ENCODE measurements at regions of chr1 and their contacts with region 1.

Region 1: GRCh38 chr1:224644553-224645154 is 28.5 kb downstream of the CNIH3 start:
- DNase-seq: peak in 1 of 5 donors; percentile 16
- ATAC-seq: peak in 3 of 4 donors; percentile 42 to 57 (median 52)
- H3K4me3 ChIP-seq: no peak overlapping the region
- H3K27ac ChIP-seq: no peak overlapping the region
- H3K4me1 ChIP-seq: peaks cover 0 to 10% (median 0%) of the 10 kb centered on the region in 12 donors
- H3K27me3 ChIP-seq: peaks cover 0 to 5% (median 0%) of the 10 kb centered on the region in 9 donors
- CTCF ChIP-seq: peak; percentile 71 to 91 (median 85)
- POLR2A ChIP-seq: no peak

Region 2: DNA sequence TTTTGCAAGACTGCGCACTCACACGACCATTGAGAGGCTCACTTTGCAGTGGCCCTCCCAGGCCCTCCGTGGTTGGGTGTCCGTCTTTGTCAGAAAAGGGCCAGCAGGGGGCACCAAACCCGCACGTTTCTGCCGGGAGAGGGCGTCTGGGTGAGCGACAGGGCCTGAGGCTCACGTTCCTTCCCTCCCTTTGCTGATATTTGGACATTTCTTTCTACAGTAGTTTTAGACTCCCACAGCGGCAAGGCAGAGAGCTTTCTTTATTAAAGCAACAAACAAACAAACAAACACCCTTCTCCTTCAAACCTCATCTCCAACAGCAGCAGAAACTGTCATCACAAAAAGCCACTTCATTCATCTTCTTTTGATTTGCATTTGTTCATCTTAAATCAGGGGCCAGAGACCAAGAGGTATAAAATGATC is 130.9 kb before region 1 on chr1:
- intact Hi-C with region 1: loop called in 4 of 10 experiments (anchors 5 to 10 kb)
- DNase-seq: peak; percentile 79 to 90 (median 84)
- ATAC-seq: peak; percentile 75 to 95 (median 92)
- H3K4me3 ChIP-seq: no peak overlapping the region
- H3K27ac ChIP-seq: no peak overlapping the region
- H3K4me1 ChIP-seq: peaks cover 0 to 7% (median 0%) of the 10 kb centered on the region in 12 donors
- H3K27me3 ChIP-seq: no peaks in the 10 kb centered on the region
- CTCF ChIP-seq: peak; percentile 83 to 95 (median 91)
- POLR2A ChIP-seq: no peak

Region 3: DNA sequence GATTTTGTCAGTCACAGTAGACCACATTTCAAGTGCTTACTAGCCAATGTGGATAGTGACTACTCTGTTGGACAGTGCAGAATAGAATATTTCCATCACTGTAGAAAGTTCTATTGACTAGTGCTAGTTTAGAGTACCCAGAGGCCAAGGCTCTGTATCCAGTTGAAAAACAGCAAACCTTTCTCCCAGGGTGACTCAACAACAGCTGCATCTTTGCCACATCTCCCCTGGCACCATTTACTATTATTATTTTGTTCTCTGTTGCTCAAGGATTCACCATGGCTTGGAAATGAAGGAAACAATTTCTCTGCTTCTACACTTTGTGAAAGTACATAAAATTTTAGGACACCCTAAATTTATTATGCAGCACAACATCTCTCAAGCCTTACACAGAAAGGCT is 124.8 kb before region 1 on chr1:
- intact Hi-C with region 1: loop called in 4 of 10 experiments (anchors 5 to 10 kb)
- DNase-seq: no peak
- ATAC-seq: no peak
- H3K4me3 ChIP-seq: no peak overlapping the region
- H3K27ac ChIP-seq: no peak overlapping the region
- H3K4me1 ChIP-seq: no peaks in the 10 kb centered on the region
- H3K27me3 ChIP-seq: no peaks in the 10 kb centered on the region
- CTCF ChIP-seq: no peak
- POLR2A ChIP-seq: no peak

Region 4: GRCh38 chr1:224851210-224851847 is 206.7 kb after region 1 on chr1:
- intact Hi-C with region 1: loop called (anchors 1 to 10 kb)
- DNase-seq: peak; percentile 17 to 67 (median 47)
- ATAC-seq: peak; percentile 42 to 64 (median 50)
- H3K4me3 ChIP-seq: no peak overlapping the region
- H3K27ac ChIP-seq: no peak overlapping the region
- H3K4me1 ChIP-seq: no peaks in the 10 kb centered on the region
- H3K27me3 ChIP-seq: peaks cover 0 to 12% (median 0%) of the 10 kb centered on the region in 9 donors
- CTCF ChIP-seq: peak; percentile 42 to 70 (median 55)
- POLR2A ChIP-seq: no peak

Region 5: GRCh38 chr1:224922404-224923164 is 277.9 kb after region 1 on chr1:
- intact Hi-C with region 1: loop called in 3 of 10 experiments (anchors 10 kb)
- DNase-seq: no peak
- ATAC-seq: peak in 3 of 4 donors; percentile 55 to 76 (median 65)
- H3K4me3 ChIP-seq: no peak overlapping the region
- H3K27ac ChIP-seq: no peak overlapping the region
- H3K4me1 ChIP-seq: no peaks in the 10 kb centered on the region
- H3K27me3 ChIP-seq: no peaks in the 10 kb centered on the region
- CTCF ChIP-seq: peak; percentile 53 to 77 (median 62)
- POLR2A ChIP-seq: no peak